HepG2 (cell line): ENCODE measurements at regions of chr20 and their contacts with region 1.

Region 1: GRCh38 chr20:25032478-25033280 is 25.3 kb downstream of the ACSS1 start:
- DNase-seq: peak; percentile 88
- ATAC-seq: peak; percentile 91
- H3K4me3 ChIP-seq: peak overlapping the region; percentile 12 to 56 (median 22); a peak in 5 of 6 replicates
- H3K27ac ChIP-seq: peak overlapping the region; percentile 55
- H3K4me1 ChIP-seq: peaks cover 64% of the 10 kb centered on the region
- H3K27me3 ChIP-seq: no peaks in the 10 kb centered on the region
- CTCF ChIP-seq: no peak
- EP300 ChIP-seq: peak; percentile 17 to 69; a peak in 3 of 4 replicates
- POLR2A ChIP-seq: peak in 1 of 2 experiments; percentile 32; a peak in 1 of 4 replicates
- RAD21 ChIP-seq: no peak

Region 2: DNA sequence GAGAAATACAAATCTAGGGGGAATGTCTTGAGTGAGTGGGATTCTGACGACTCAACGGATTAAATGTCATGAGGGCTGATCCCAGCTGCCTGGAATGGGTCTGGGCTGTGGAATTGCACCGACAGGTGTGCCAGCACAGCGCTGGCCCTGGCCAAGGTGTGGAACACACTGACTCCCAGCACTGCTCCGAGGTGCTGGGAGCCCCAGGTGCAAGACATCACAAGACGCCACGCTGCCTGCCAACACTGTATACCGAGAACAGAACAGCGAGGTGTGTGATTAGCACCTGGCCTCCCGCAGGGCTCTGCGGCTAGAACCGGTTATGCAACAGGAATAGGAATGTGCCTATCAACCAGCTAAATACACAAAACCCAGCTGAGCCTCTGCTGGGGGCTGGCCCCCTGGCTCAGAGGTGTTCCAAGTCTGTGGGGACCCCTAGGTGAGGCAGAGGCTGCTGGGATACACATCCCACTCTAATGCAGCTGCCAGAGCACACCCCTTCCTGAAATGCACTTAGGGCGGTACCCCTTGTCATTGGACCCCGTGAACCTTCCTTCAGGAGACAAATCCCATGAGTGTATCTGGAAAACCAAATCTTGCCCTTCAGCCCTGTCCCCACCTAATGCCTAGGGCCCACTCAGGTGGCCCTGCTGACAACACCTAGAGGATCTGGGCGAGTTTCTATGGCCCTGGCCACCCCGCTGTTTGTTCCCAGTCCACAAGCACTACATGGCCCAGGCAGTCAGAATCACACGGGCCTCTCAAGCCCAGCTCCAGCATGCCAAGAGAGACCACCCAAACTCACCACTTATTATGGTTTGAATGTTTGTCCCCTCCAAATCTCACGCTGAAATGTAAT is 15.2 kb before region 1 on chr20:
- CTCF ChIA-PET with region 1: no interaction called
- POLR2A ChIA-PET with region 1: interaction called, 10 read pairs
- in situ Hi-C with region 1: no loop called
- intact Hi-C with region 1: no loop called
- DNase-seq: peak; percentile 64
- ATAC-seq: peak; percentile 78
- H3K4me3 ChIP-seq: no peak overlapping the region; a peak in 1 of 6 replicates
- H3K27ac ChIP-seq: no peak overlapping the region
- H3K4me1 ChIP-seq: peaks cover 37% of the 10 kb centered on the region
- H3K27me3 ChIP-seq: no peaks in the 10 kb centered on the region
- CTCF ChIP-seq: no peak
- EP300 ChIP-seq: peak in 1 of 2 experiments; percentile 55; a peak in 1 of 4 replicates
- POLR2A ChIP-seq: no peak
- RAD21 ChIP-seq: no peak; the same call in 1 of the 2 replicates

Region 3: DNA sequence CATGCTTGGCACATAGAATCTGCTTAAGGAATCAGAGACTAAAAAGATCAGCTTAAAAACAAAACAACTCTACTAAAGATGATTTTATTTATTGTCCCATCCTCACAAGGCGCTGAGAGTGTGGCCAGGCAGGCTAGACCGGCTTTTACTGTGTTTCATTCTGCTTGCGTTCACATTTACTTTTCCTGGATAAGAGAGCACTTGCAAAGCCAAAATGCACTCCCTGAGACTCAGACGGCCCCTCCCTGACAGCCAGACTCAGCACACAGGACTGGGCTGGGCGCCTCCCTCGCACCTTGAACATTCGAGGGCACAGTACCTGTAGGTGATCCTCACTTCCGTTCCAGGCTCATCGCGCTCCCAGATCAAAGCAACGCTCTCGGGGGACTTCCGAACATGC is 15.1 kb after region 1 on chr20:
- CTCF ChIA-PET with region 1: no interaction called
- POLR2A ChIA-PET with region 1: interaction called, 5 read pairs
- in situ Hi-C with region 1: no loop called
- intact Hi-C with region 1: loop called (anchors 2 kb)
- DNase-seq: no peak
- ATAC-seq: no peak
- H3K4me3 ChIP-seq: no peak overlapping the region
- H3K27ac ChIP-seq: no peak overlapping the region
- H3K4me1 ChIP-seq: peaks cover 45% of the 10 kb centered on the region
- H3K27me3 ChIP-seq: no peaks in the 10 kb centered on the region; a peak in 1 of 5 replicates
- CTCF ChIP-seq: no peak
- EP300 ChIP-seq: no peak
- POLR2A ChIP-seq: no peak
- RAD21 ChIP-seq: no peak

Region 4: GRCh38 chr20:25057234-25058050 is 24.8 kb after region 1 on chr20:
- CTCF ChIA-PET with region 1: no interaction called
- POLR2A ChIA-PET with region 1: interaction called, 77 read pairs
- in situ Hi-C with region 1: no loop called
- intact Hi-C with region 1: loop called (anchors 1 kb)
- DNase-seq: no peak
- ATAC-seq: peak; percentile 66
- H3K4me3 ChIP-seq: peak overlapping the region; percentile 64 to 82 (median 67)
- H3K27ac ChIP-seq: peak overlapping the region; percentile 6
- H3K4me1 ChIP-seq: peaks cover 92% of the 10 kb centered on the region
- H3K27me3 ChIP-seq: peaks cover 0 to 29% of the 10 kb centered on the region in 2 experiments; a peak in 4 of 5 replicates
- CTCF ChIP-seq: no peak
- EP300 ChIP-seq: no peak; a peak in 1 of 4 replicates
- POLR2A ChIP-seq: peak in 1 of 2 experiments; percentile 62; a peak in 2 of 4 replicates
- RAD21 ChIP-seq: peak; percentile 54

Region 5: GRCh38 chr20:25065625-25066338 is 33.1 kb after region 1 on chr20:
- CTCF ChIA-PET with region 1: no interaction called
- POLR2A ChIA-PET with region 1: interaction called, 77 read pairs
- in situ Hi-C with region 1: no loop called
- intact Hi-C with region 1: loop called (anchors 5 kb)
- DNase-seq: peak; percentile 65
- ATAC-seq: peak; percentile 64
- H3K4me3 ChIP-seq: peak overlapping the region in 2 of 3 experiments; percentile 1 to 24; a peak in 1 of 6 replicates
- H3K27ac ChIP-seq: no peak overlapping the region
- H3K4me1 ChIP-seq: peaks cover 63% of the 10 kb centered on the region
- H3K27me3 ChIP-seq: peaks cover 0 to 6% of the 10 kb centered on the region in 2 experiments; a peak in 3 of 5 replicates
- CTCF ChIP-seq: peak; percentile 91
- EP300 ChIP-seq: no peak
- POLR2A ChIP-seq: no peak
- RAD21 ChIP-seq: peak; percentile 96

Region 6: DNA sequence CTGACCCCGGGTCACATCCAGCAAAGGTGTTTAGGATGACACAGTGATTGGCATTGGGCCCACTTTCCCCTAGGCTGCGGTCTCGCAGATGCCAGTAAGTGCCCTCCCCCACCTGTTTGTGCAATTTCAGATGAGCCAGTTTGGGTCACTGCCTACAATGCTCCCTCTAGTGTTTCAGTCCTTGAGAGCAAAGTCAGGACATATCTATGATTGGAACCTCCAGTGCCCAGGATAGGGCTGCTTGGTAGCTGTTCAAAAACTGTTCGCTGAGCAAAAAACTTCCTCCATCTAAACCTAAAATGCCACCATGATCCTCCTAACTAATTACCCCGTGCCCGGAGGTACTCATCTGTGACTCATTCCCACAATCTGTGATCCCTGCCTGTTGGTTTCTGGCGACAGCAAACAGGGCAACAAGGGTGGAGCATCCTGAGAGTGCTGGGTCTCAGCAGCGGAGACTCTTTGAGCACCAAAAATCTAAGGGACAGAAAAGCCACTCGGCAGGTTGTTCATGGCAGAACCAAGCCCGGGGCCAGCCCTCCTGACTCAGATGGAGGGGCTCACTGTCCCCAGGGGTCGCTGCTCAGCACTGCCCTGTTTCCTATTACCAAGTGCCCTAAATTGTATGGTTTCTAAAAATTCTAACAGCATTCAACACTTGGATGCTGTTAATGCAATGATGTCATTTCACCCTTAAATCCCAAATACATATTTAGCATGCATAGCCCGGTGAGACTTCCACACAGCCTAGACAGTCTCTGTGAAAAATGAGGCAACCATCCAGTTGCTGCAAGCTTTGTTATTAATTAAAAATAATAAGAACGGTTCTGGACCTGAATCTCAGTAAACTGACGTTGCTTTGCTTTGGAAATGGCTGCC is 44.3 kb after region 1 on chr20:
- CTCF ChIA-PET with region 1: no interaction called
- POLR2A ChIA-PET with region 1: no interaction called
- in situ Hi-C with region 1: no loop called
- intact Hi-C with region 1: no loop called
- DNase-seq: peak; percentile 82
- ATAC-seq: peak; percentile 79
- H3K4me3 ChIP-seq: peak overlapping the region; percentile 22 to 65 (median 30); a peak in 5 of 6 replicates
- H3K27ac ChIP-seq: no peak overlapping the region
- H3K4me1 ChIP-seq: peaks cover 25% of the 10 kb centered on the region
- H3K27me3 ChIP-seq: peaks cover 10 to 70% of the 10 kb centered on the region in 2 experiments; a peak in 4 of 5 replicates
- CTCF ChIP-seq: peak; percentile 75
- EP300 ChIP-seq: 0 out of 4 replicates have a peak, but pooled peaks of 1 of the 2 experiments have one; percentile 26
- POLR2A ChIP-seq: no peak
- RAD21 ChIP-seq: peak; percentile 64

Region 7: DNA sequence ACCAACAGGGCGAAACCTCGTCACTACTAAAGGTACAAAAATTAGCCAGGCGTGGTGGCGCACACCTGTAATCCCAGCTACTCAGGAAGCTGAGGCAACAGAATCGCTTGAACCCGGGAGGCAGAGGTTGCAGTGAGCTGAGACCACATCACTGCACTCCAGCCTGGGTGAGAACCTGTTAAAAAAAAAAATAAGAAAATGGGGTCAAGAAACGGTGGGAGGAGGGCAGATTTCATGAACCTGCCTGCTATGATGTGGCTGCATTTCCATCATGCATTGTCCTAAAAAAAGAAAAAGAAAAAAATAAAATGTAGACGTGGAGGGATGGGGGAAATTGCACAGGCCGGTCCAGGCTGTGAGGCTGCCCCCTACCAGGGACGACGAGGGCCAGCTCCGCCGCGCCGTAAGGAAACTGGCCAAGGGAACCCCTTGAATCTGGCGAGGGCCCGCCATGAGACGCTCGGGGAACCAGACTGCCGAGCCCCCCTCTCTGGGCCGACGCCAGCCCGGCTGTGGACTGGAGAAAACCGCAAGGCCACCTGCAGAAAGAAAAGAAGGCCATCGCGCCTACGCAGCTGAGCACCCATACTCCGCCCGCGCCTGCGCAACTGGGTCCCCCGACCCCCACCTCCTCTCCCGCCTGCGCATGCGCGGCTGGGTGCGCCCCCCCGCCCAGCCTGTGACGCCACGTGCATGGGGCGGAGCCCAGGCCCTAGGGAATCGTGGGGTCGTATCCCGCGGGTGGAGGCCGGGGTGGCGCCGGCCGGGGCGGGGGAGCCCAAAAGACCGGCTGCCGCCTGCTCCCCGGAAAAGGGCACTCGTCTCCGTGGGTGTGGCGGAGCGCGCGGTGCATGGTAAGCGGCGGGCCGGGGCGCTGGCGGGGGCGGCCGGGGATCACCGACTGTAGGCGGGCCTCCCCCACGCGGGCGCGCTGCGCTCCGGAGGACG is 162.6 kb after region 1 on chr20 and contains the start of gene ENTPD6:
- CTCF ChIA-PET with region 1: no interaction called
- POLR2A ChIA-PET with region 1: interaction called, 13 read pairs
- in situ Hi-C with region 1: no loop called
- intact Hi-C with region 1: no loop called
- DNase-seq: peak; percentile 90
- ATAC-seq: peak; percentile 81
- H3K4me3 ChIP-seq: peak within 1 kb of the TSS; percentile 82 to 97 (median 93)
- H3K27ac ChIP-seq: peak within 1 kb of the TSS; percentile 67
- H3K4me1 ChIP-seq: peaks cover 48% of the 10 kb centered on the region
- H3K27me3 ChIP-seq: peaks cover 2 to 8% of the 10 kb centered on the region in 2 experiments; a peak in 1 of 5 replicates
- CTCF ChIP-seq: peak; percentile 71
- EP300 ChIP-seq: no peak
- POLR2A ChIP-seq: peak; percentile 89 to 97
- RAD21 ChIP-seq: peak; percentile 47
- total RNA-seq, gene ENTPD6: 98.4 and 164 TPM in 2 replicates

Region 8: GRCh38 chr20:25205277-25206059 is 172.8 kb after region 1 on chr20:
- CTCF ChIA-PET with region 1: no interaction called
- POLR2A ChIA-PET with region 1: no interaction called
- in situ Hi-C with region 1: no loop called
- intact Hi-C with region 1: no loop called
- DNase-seq: no peak
- ATAC-seq: peak; percentile 37
- H3K4me3 ChIP-seq: no peak overlapping the region
- H3K27ac ChIP-seq: no peak overlapping the region
- H3K4me1 ChIP-seq: peaks cover 26% of the 10 kb centered on the region
- H3K27me3 ChIP-seq: no peaks in the 10 kb centered on the region
- CTCF ChIP-seq: no peak; the same call in 1 of the 2 replicates
- EP300 ChIP-seq: no peak
- POLR2A ChIP-seq: no peak
- RAD21 ChIP-seq: no peak